ENCODE measurements at regions of chr16 and their contacts with region 1.

Region 1: DNA sequence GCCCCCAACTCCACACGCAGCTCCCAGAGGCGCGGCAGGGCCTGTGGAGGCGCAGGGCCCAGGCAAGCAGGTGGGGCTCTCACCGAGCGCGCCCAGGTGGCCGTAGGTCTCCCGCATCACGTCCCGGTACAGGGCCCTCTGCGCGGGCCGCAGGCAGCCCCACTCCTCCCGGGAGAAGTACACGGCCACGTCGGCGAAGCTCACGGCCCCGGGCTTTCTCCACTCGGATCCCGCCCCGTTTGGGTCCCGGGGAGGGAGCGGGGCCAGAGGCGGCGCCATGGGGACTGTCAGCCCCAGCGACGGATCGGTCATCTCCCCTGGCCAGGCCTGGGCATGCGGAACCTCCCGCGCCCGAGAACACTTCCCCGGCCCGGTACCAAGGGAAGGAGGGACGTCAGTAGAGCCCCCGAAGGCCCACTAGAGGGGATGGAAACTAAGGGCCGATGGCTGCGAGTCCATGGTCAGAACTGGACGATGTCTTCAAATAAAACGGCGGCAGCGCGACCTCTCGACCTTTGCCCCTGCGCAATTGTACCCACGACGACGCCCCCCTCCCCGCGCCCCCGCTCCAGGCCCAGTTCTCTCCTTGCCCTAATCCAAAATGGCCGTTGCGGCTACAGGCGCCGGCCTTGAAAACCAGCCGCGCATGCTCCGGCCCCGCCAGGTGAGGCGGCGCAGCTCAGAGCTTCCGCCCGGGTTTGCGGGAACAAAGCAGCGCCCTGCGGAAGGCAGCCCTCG is at the start of gene ZNF747:
- DNase-seq: peak; percentile 94
- H3K4me3 Mint-ChIP-seq: peak within 1 kb of the TSS; percentile 86
- H3K27ac Mint-ChIP-seq: peak within 1 kb of the TSS; percentile 97
- H3K4me1 Mint-ChIP-seq: peaks cover 51% of the 10 kb centered on the region
- H3K27me3 Mint-ChIP-seq: no peaks in the 10 kb centered on the region

Region 2: GRCh38 chr16:30551781-30552180 is 17.2 kb after region 1 on chr16:
- CTCF ChIA-PET with region 1: interaction called, 42 read pairs
- DNase-seq: peak; percentile 85
- H3K4me3 Mint-ChIP-seq: peak overlapping the region; percentile 68
- H3K27ac Mint-ChIP-seq: peak overlapping the region; percentile 97
- H3K4me1 Mint-ChIP-seq: peaks cover 67% of the 10 kb centered on the region
- H3K27me3 Mint-ChIP-seq: no peaks in the 10 kb centered on the region

Region 3: DNA sequence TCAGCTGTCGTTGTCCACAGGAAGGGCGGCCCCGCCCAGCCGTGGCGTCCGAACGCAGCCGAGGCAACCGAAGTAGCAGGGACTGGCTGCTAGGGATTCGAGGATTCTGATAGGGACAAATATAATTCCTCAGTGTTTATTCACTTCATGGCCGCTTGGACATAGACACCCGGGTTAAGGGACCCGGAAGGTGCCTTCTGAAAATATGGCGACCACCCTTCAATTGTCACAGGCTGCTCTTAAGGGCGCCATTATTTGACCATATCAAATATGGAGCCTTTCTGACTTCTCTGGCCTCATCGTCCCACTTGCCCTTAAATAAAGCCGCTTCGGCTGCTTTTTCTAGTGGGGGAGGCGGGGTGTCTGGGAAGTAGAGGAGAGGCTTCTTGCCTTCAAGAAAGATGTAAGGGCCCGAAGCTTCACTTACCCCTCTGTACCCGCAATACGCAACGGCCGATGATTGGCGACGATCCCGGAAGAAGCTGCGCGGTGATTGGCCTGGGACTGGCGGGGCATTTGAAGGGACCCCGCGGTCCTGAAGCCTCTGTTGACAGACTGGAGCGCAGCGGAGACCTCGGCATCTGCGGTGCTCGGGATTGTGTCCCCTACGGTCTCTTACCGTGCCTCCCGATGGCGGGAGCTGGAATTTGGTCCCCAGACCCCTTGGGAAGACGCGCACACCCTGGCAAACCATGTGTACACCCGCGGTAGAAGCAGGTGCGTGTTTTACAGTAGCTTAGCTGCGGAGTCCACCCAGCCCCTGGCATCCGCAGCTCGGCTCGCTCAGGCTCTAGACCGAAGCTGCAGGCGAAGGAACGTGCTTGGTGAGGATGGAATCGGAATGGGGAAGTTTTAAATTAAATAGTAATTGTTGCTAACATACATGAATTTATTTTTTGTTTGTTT is 37.4 kb after region 1 on chr16 and contains the start of gene ZNF688:
- CTCF ChIA-PET with region 1: interaction called, 20 read pairs
- DNase-seq: peak; percentile 98
- H3K4me3 Mint-ChIP-seq: peak within 1 kb of the TSS; percentile 86
- H3K27ac Mint-ChIP-seq: peak within 1 kb of the TSS; percentile 96
- H3K4me1 Mint-ChIP-seq: peaks cover 55% of the 10 kb centered on the region
- H3K27me3 Mint-ChIP-seq: no peaks in the 10 kb centered on the region

Region 4: GRCh38 chr16:30602616-30603277 is 68.2 kb after region 1 on chr16:
- CTCF ChIA-PET with region 1: interaction called, 22 read pairs
- DNase-seq: no peak
- H3K4me3 Mint-ChIP-seq: no peak overlapping the region
- H3K27ac Mint-ChIP-seq: no peak overlapping the region
- H3K4me1 Mint-ChIP-seq: peaks cover 14% of the 10 kb centered on the region
- H3K27me3 Mint-ChIP-seq: no peaks in the 10 kb centered on the region